Dendritic cell treated with granulocyte-macrophage colony-stimulating factor and Interleukin-4, amounts not matched to agents 40 ng/mL and 50 ng/mL, for 4 days (primary cell): ENCODE measurements at regions of chr5 and their contacts with region 1.

Region 1: DNA sequence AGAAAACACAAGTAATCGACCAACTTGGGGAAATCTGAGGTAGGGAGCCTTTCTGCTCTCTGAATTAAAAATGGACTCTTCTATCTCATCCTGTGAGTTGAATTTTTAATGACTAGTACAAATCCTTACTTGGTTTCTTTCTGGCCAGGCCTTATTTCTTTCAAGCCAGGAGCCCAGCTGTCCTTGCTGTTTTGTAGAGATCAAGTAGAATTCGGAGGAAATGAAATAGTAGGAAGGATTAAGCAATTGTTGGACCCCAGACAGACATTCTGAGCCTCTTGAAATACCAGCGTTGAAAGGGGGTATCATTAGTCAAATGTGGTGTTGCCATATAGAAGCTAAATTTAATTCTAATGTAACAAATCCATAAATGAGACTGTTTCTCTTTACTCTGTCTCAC is 53.7 kb upstream of the SMIM15 start:
- H3K4me3 Mint-ChIP-seq: no peak overlapping the region
- H3K27ac Mint-ChIP-seq: no peak overlapping the region
- H3K4me1 Mint-ChIP-seq: no peaks in the 10 kb centered on the region
- H3K27me3 Mint-ChIP-seq: no peaks in the 10 kb centered on the region

Region 2: DNA sequence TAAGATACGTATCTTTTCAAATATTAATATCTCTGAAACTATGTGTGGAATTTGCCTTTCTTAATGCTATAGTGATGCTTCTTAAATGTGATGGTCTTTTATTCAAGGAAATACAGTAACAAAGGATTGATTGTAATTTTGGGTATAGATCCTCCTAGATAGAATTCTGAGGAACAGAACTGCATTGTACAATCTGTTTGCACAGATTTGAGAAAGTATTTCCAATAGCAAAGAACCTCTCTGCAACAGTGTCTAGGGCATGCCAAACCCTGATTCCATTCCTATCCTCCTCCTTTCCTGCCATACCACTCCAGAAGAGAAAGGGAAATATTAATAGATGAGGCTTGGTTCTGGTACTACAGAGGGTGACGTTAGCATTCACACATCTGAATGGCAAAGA is 64.1 kb before region 1 on chr5:
- intact Hi-C with region 1: loop called (anchors 2 kb)
- H3K4me3 Mint-ChIP-seq: no peak overlapping the region
- H3K27ac Mint-ChIP-seq: no peak overlapping the region
- H3K4me1 Mint-ChIP-seq: no peaks in the 10 kb centered on the region
- H3K27me3 Mint-ChIP-seq: no peaks in the 10 kb centered on the region

Region 3: GRCh38 chr5:61744690-61745594 is 528.9 kb after region 1 on chr5:
- intact Hi-C with region 1: no loop called
- H3K4me3 Mint-ChIP-seq: no peak overlapping the region
- H3K27ac Mint-ChIP-seq: no peak overlapping the region
- H3K4me1 Mint-ChIP-seq: no peaks in the 10 kb centered on the region
- H3K27me3 Mint-ChIP-seq: no peaks in the 10 kb centered on the region